MCF 10A (cell line): ENCODE measurements at regions of chr1 and their contacts with region 1.

Region 1: GRCh38 chr1:109385417-109385816 is 12.3 kb downstream of the SORT1 start:
- DNase-seq: peak; percentile 31
- H3K4me3 Mint-ChIP-seq: peak overlapping the region; percentile 11
- H3K27ac Mint-ChIP-seq: peak overlapping the region; percentile 80
- H3K4me1 Mint-ChIP-seq: peaks cover 47% of the 10 kb centered on the region
- H3K27me3 Mint-ChIP-seq: no peaks in the 10 kb centered on the region
- CTCF ChIP-seq: no peak

Region 2: GRCh38 chr1:109370712-109371455 is 14.5 kb before region 1 on chr1:
- CTCF ChIA-PET with region 1: interaction called, 7 read pairs
- POLR2A ChIA-PET with region 1: interaction called, 86 read pairs
- intact Hi-C with region 1: no loop called
- DNase-seq: peak; percentile 64
- H3K4me3 Mint-ChIP-seq: peak overlapping the region; percentile 48
- H3K27ac Mint-ChIP-seq: peak overlapping the region; percentile 52
- H3K4me1 Mint-ChIP-seq: peaks cover 34% of the 10 kb centered on the region
- H3K27me3 Mint-ChIP-seq: no peaks in the 10 kb centered on the region
- CTCF ChIP-seq: no peak